PC-9 (cell line): ENCODE measurements at regions of chr4 and their contacts with region 1.

Region 1: DNA sequence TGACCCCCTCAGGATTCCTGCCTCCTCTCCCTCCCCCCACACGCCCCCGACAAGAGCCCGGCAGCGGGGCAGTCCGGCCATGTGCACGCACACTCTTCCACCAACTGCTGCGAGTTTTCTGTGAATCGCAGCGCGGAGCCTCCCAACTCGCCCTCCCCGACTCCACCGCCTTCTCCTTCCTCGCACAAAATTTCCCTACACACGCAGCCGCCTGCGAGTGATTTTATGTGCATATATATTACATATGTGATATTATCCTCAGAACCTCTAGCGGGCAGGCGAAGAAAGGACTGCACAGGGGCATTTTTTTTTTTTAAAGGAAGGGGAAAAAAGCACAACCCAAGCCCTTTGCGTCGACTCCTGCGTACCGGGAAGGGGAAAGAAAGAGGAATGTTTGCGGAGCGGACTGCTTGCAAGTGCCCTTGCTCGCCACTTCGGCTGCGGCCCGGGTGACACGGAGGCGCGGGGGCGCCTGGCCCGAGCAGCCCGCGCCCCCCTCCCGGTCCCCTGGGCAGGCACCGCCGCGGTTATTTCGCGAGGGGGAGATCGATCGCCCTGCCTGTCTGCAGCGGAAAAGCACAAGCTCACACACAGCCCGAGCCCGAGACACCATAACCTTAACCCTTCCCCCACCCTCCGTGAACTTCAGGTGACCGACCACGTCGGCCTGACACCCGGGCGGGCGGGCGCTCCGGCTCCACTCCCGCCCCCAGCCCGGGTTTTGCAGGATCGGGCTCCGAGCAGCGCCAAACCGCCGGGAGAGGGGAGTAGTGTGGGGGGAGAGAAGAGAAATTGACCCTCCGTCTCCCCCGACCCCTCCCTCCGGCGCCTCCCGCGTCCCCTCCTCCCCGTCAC is 2.3 kb downstream of the ZNF827 start:
- DNase-seq: peak; percentile 72 to 75
- H3K4me3 ChIP-seq: peak overlapping the region; percentile 74
- H3K27ac ChIP-seq: peak overlapping the region; percentile 93
- H3K4me1 ChIP-seq: peaks cover 22% of the 10 kb centered on the region
- H3K27me3 ChIP-seq: no peaks in the 10 kb centered on the region
- CTCF ChIP-seq: peak; percentile 32; the same call in 1 of the 2 replicates

Region 2: GRCh38 chr4:145352438-145353145 is 583.8 kb before region 1 on chr4:
- CTCF ChIA-PET with region 1: no interaction called
- POLR2A ChIA-PET with region 1: no interaction called
- intact Hi-C with region 1: no loop called
- DNase-seq: no peak
- H3K4me3 ChIP-seq: no peak overlapping the region
- H3K27ac ChIP-seq: no peak overlapping the region
- H3K4me1 ChIP-seq: no peaks in the 10 kb centered on the region
- H3K27me3 ChIP-seq: no peaks in the 10 kb centered on the region
- CTCF ChIP-seq: no peak

Region 3: DNA sequence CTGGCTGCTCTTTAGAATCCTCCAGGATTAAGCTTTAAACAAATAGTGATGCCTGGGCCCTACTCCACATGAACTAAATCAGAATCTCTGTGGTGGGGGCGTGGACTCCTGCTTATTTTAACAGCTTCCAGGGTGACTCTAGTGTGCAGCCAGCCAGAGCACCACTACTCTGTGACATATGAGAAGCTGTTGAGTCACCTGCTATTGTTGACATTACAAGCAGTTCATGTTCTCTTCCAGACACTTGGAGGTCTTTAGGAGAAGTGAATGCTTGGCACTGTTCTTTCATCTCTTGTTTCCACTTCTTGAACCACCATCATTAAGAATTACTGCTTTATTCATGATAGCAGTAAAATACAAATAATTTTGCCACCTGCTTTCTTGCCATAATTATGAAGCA is 256.8 kb before region 1 on chr4:
- CTCF ChIA-PET with region 1: no interaction called
- POLR2A ChIA-PET with region 1: no interaction called
- intact Hi-C with region 1: loop called (anchors 5 kb)
- DNase-seq: peak; percentile 51 to 77
- H3K4me3 ChIP-seq: no peak overlapping the region
- H3K27ac ChIP-seq: peak overlapping the region; percentile 60
- H3K4me1 ChIP-seq: peaks cover 20% of the 10 kb centered on the region
- H3K27me3 ChIP-seq: no peaks in the 10 kb centered on the region
- CTCF ChIP-seq: no peak

Region 4: GRCh38 chr4:145808021-145808650 is 128.2 kb before region 1 on chr4:
- CTCF ChIA-PET with region 1: no interaction called
- POLR2A ChIA-PET with region 1: no interaction called
- intact Hi-C with region 1: loop called (anchors 2 kb)
- DNase-seq: peak; percentile 77 to 96
- H3K4me3 ChIP-seq: peak overlapping the region; percentile 35; the same call in 1 of the 2 replicates
- H3K27ac ChIP-seq: peak overlapping the region; percentile 99
- H3K4me1 ChIP-seq: peaks cover 26% of the 10 kb centered on the region
- H3K27me3 ChIP-seq: no peaks in the 10 kb centered on the region
- CTCF ChIP-seq: no peak

Region 5: DNA sequence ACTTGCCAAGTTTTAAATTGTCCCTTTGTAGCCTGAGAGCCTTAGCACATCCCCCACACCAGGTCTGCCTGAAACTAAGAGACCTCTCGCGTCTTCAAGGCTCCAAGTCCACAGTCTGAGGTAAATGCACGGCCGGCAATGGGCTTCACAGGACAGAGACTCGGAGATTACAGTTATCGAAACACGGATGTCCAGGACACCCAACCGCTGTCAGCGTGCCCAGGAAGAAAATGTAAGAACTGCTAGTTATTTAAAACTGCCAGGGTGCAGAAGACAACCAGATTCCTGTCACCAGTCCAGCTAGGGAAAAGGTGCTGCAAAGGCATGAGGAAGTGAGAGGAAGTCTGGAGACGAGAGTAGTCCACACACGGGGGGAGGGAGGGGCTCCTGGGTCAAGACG is 26.6 kb before region 1 on chr4:
- CTCF ChIA-PET with region 1: no interaction called
- POLR2A ChIA-PET with region 1: interaction called, 5 read pairs
- intact Hi-C with region 1: loop called (anchors 1 kb)
- DNase-seq: peak; percentile 55 to 65
- H3K4me3 ChIP-seq: peak overlapping the region; percentile 52; the same call in 1 of the 2 replicates
- H3K27ac ChIP-seq: peak overlapping the region; percentile 85
- H3K4me1 ChIP-seq: peaks cover 28% of the 10 kb centered on the region
- H3K27me3 ChIP-seq: no peaks in the 10 kb centered on the region
- CTCF ChIP-seq: no peak

Region 6: DNA sequence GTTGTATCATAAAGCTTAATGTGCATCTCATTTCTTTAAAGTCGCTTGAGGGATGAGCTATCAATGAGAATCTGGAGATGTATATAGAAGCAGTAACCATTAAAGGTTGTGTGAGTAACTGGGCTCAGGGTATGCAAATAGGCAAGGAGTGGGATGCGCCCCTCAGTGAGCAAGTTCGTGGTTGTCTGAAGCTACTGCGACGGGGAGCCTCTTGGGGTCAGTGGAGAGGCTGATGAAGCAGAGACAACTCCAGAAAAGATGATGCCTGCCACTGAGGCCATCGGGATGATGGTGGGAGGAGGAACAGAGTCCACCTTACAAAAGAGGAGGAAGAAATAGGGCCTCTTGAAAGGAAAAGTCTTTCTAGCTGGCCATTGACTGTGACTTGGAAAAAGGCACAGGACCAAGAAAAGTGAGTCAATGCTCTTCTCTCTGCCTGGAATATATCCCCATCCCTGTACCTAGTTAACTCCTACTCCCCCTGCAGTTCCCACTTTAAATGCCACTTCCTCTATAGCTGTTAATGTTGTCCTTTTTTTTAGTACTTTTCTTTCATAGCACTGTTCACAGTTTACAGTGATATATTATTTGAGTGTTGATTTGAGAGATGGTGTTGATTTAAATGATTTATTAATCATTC is 187.8 kb after region 1 on chr4:
- CTCF ChIA-PET with region 1: no interaction called
- POLR2A ChIA-PET with region 1: no interaction called
- intact Hi-C with region 1: no loop called
- DNase-seq: no peak
- H3K4me3 ChIP-seq: no peak overlapping the region
- H3K27ac ChIP-seq: no peak overlapping the region
- H3K4me1 ChIP-seq: no peaks in the 10 kb centered on the region
- H3K27me3 ChIP-seq: no peaks in the 10 kb centered on the region
- CTCF ChIP-seq: no peak

Region 7: GRCh38 chr4:146333187-146333894 is 397.0 kb after region 1 on chr4:
- CTCF ChIA-PET with region 1: no interaction called
- POLR2A ChIA-PET with region 1: no interaction called
- intact Hi-C with region 1: loop called (anchors 10 kb)
- DNase-seq: no peak
- H3K4me3 ChIP-seq: no peak overlapping the region
- H3K27ac ChIP-seq: no peak overlapping the region
- H3K4me1 ChIP-seq: peaks cover 42% of the 10 kb centered on the region
- H3K27me3 ChIP-seq: no peaks in the 10 kb centered on the region
- CTCF ChIP-seq: no peak